Heart right ventricle (tissue), 16 donors: ENCODE measurements at regions of chr14 and their contacts with region 1.

Region 1: DNA sequence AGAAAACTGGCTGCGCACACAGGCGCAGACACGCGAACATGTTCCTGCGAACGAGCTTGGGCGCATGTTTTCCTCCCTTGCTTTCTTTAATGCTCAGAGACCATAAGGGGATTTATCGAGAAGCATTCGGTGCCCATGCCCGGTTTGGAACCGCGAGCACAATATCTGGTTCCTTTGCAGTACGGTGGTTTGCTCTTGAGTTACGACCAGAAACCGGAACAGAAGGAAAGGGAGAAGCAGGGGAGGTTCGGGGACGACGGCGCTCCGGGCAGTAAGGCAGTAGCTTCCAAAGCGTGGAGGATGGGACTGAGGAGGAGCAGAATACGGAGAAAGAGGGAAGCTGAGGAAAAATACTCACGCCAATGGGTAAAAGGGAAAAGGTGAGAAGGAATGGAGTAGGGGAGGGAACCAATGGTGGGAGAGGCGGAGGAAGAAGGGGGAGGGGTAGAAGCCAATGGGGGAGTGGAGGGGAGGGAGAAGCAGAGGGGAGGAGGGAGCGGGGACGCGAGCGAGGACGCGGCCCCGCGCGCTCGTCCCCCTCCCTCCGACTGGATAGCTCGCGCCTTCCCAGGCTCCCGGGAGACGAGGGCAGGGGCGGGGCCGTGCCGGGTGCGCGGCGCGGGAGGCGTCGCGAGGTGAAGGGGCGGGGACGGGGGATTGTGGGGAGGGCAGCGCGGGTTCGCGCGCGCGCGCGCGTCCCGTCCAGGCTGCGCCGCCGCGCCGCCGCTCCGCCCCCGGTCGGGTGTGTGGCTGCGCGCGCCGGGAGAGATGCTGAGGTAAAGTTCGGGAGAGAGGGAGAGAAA is 625 bp upstream of the ARHGAP5 start:
- DNase-seq: peak; percentile 96 to 98
- ATAC-seq: peak; percentile 94 to 97 (median 96)
- H3K4me3 ChIP-seq: peak overlapping the region; percentile 90 to 98 (median 95)
- H3K27ac ChIP-seq: peak overlapping the region; percentile 93 to 99 (median 98)
- H3K4me1 ChIP-seq: peaks cover 0 to 60% (median 45%) of the 10 kb centered on the region in 9 donors
- H3K27me3 ChIP-seq: no peaks in the 10 kb centered on the region
- CTCF ChIP-seq: no peak

Region 2: DNA sequence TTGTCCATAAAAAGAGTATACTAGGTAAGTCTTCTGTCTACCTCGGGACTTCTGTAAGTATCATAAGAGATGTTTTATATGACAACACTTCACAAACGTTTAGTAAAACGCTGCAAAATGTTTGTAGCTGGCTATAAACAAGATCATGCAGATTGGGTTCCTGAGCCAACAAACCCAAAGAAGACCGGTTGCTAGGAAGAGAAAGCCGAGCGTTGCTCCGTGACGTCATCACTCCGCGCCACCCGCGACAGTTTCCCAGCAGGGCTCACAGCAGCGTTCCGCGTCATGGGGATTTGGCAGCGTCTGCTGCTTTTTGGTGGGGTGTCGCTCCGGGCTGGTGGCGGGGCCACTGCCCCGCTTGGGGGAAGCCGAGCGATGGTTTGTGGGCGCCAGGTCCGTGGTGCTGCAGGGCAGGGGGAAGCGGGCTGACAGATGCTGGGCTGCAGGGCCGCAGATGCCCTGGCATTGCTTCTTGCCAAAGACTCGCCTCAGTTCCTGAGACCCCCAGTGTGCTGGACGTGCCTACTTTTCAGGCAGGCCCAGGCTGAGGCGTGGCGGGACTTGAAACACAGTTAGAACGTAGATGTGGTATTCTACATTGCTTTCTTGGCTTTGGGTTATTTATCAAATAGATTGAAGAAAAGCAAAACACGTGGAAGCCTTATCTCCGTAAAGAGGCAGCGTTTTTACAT is 515.2 kb before region 1 on chr14 and contains the start of gene NUBPL:
- intact Hi-C with region 1: loop called in 3 of 10 experiments (anchors 10 kb)
- DNase-seq: peak; percentile 97 to 98
- ATAC-seq: peak; percentile 96 to 99 (median 98)
- H3K4me3 ChIP-seq: peak within 1 kb of the TSS; percentile 65 to 91 (median 79)
- H3K27ac ChIP-seq: peak within 1 kb of the TSS; percentile 15 to 95 (median 84)
- H3K4me1 ChIP-seq: peaks cover 0 to 29% (median 9%) of the 10 kb centered on the region in 9 donors
- H3K27me3 ChIP-seq: no peaks in the 10 kb centered on the region
- CTCF ChIP-seq: no peak
- total RNA-seq, gene NUBPL: 19.3 to 32.0 (median 24.7) TPM

Region 3: GRCh38 chr14:31937721-31938346 is 138.6 kb before region 1 on chr14:
- intact Hi-C with region 1: loop called in 7 of 10 experiments (anchors 2 to 10 kb)
- DNase-seq: peak in 1 of 2 donors; percentile 55
- ATAC-seq: peak; percentile 62 to 98 (median 80)
- H3K4me3 ChIP-seq: no peak overlapping the region
- H3K27ac ChIP-seq: peak overlapping the region in 1 of 10 donors; percentile 33
- H3K4me1 ChIP-seq: peaks cover 0 to 37% (median 18%) of the 10 kb centered on the region in 9 donors
- H3K27me3 ChIP-seq: no peaks in the 10 kb centered on the region
- CTCF ChIP-seq: no peak

Region 4: DNA sequence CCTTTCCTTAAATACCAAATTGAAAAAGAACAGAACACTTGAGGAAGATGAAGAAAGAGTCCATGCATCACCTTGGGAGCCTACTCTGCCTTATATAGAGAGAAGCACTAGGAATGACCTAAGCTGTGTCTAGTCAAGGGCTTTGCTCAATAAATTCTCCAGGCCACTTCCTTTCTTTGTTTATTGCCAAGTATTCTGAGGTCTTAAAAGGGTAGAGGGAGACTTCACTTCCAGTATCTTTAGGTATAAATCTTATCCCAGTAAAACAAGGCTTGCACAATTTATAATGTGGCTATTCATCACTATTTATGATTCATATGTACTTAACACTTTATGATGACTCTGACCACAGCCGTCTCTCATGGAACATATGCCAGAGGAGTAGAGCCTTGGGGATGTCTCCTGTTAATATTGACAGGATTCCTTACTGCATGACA is 84.5 kb before region 1 on chr14:
- intact Hi-C with region 1: loop called in 1 of 10 experiments (anchors 10 kb)
- DNase-seq: no peak
- ATAC-seq: no peak
- H3K4me3 ChIP-seq: no peak overlapping the region
- H3K27ac ChIP-seq: peak overlapping the region in 1 of 10 donors; percentile 70
- H3K4me1 ChIP-seq: peaks cover 0 to 66% (median 46%) of the 10 kb centered on the region in 9 donors
- H3K27me3 ChIP-seq: no peaks in the 10 kb centered on the region
- CTCF ChIP-seq: no peak

Region 5: DNA sequence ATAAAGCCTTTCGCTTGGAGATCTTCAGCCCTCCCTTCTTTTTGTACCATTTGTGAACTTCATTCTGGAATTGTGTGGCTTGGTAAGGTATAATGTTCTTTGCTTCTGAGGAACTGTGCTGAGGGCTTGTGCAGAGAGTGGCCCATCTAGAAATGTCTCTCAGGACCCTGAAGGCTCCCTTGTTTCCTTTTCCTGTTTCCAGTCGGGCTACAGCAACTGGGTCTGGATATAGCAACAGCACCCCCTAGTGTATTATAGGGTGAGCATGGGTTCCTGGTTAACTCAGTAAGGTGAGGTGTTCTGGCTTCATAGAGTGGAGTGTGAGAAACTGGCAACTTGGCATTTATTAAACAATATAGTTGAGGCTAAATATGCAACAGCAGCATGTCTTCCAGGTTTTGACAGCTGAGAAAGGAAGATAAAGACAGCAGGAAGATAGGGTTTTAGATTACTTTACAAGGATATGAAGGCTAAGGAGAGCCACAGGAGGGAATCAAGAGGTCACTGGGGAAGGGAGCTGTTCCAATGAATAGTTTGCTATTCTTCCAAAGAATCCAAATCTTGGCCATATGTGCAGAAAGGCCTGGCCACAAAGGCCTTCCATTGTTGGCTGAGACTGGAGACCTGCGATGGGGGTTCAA is 175.7 kb after region 1 on chr14:
- intact Hi-C with region 1: loop called (anchors 1 to 10 kb)
- DNase-seq: peak in 1 of 2 donors; percentile 69
- ATAC-seq: peak; percentile 72 to 90 (median 83)
- H3K4me3 ChIP-seq: no peak overlapping the region
- H3K27ac ChIP-seq: peak overlapping the region in 5 of 10 donors; percentile 8 to 44 (median 23)
- H3K4me1 ChIP-seq: peaks cover 0 to 37% (median 9%) of the 10 kb centered on the region in 9 donors
- H3K27me3 ChIP-seq: no peaks in the 10 kb centered on the region
- CTCF ChIP-seq: peak; percentile 61 to 93 (median 83)

Region 6: DNA sequence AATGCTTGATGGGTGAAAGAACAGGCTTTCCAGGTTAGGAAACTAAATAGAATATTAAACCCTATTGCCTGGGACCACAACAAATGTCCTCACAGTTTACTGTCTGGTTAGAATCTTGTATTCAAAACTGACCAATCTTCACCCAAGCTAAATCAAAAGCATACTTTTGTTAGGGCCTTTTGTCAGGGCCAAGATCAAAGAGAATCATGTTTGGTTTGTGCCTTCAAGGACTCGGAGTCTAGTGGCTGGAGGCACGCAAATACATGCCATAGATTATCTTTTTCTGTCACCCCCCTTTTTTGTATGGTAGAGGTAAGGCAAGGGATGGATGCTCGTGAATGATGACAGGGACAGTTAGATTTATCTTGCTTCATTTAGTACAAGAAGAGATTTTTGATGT is 201.5 kb after region 1 on chr14:
- intact Hi-C with region 1: no loop called
- DNase-seq: no peak
- ATAC-seq: no peak
- H3K4me3 ChIP-seq: no peak overlapping the region
- H3K27ac ChIP-seq: no peak overlapping the region
- H3K4me1 ChIP-seq: no peaks in the 10 kb centered on the region
- H3K27me3 ChIP-seq: no peaks in the 10 kb centered on the region
- CTCF ChIP-seq: no peak

Region 7: DNA sequence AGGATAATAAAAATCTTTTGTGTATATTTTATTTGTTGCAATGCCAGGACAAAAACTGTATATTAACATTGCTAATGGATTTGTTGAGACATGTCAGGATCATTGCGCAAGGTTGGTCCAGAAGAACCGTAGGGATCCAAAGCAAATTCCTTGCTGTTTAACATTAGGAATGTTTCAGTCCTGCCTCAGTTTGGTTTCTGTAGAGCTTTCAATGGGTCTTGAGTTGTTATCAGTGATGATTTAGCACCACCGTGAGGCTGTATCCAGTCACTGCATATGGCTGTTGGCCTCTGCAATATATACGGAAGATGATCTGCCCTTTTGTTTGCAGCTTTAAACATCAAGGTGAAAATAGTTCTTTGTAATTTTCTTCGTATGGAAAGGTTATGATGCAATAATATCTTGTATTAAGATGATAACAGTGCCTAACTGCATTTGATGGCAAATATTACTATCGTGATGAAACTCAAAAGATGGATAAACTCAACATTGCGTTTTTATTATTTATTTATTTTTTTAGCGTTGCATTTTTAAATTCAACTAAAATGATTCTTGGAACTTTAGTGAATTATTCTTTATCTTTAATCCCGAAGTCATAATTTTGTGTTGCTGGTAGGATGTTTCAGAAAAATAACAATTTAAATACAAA is 483.9 kb after region 1 on chr14:
- intact Hi-C with region 1: loop called in 3 of 10 experiments (anchors 5 to 10 kb)
- DNase-seq: peak in 1 of 2 donors; percentile 55
- ATAC-seq: peak; percentile 49 to 86 (median 74)
- H3K4me3 ChIP-seq: no peak overlapping the region
- H3K27ac ChIP-seq: peak overlapping the region in 6 of 10 donors; percentile 5 to 58 (median 47)
- H3K4me1 ChIP-seq: peaks cover 7 to 49% (median 29%) of the 10 kb centered on the region in 9 donors
- H3K27me3 ChIP-seq: no peaks in the 10 kb centered on the region
- CTCF ChIP-seq: peak; percentile 30 to 87 (median 81)